ENCODE measurements at regions of chr6 and their contacts with region 1.

Region 1: GRCh38 chr6:13711733-13712598 is at the start of gene RANBP9:
- DNase-seq: peak; percentile 90
- ATAC-seq: peak; percentile 86
- H3K4me3 Mint-ChIP-seq: peak within 1 kb of the TSS; percentile 94
- H3K27ac Mint-ChIP-seq: peak within 1 kb of the TSS; percentile 97
- H3K4me1 Mint-ChIP-seq: peaks cover 51% of the 10 kb centered on the region
- H3K27me3 Mint-ChIP-seq: no peaks in the 10 kb centered on the region
- total RNA-seq, gene RANBP9: 50.0 to 53.4 TPM

Region 2: GRCh38 chr6:12992770-12993169 is 719.2 kb before region 1 on chr6:
- CTCF ChIA-PET with region 1: no interaction called
- POLR2A ChIA-PET with region 1: no interaction called
- DNase-seq: no peak
- ATAC-seq: no peak
- H3K4me3 Mint-ChIP-seq: no peak overlapping the region
- H3K27ac Mint-ChIP-seq: no peak overlapping the region
- H3K4me1 Mint-ChIP-seq: no peaks in the 10 kb centered on the region
- H3K27me3 Mint-ChIP-seq: peaks cover 9% of the 10 kb centered on the region

Region 3: DNA sequence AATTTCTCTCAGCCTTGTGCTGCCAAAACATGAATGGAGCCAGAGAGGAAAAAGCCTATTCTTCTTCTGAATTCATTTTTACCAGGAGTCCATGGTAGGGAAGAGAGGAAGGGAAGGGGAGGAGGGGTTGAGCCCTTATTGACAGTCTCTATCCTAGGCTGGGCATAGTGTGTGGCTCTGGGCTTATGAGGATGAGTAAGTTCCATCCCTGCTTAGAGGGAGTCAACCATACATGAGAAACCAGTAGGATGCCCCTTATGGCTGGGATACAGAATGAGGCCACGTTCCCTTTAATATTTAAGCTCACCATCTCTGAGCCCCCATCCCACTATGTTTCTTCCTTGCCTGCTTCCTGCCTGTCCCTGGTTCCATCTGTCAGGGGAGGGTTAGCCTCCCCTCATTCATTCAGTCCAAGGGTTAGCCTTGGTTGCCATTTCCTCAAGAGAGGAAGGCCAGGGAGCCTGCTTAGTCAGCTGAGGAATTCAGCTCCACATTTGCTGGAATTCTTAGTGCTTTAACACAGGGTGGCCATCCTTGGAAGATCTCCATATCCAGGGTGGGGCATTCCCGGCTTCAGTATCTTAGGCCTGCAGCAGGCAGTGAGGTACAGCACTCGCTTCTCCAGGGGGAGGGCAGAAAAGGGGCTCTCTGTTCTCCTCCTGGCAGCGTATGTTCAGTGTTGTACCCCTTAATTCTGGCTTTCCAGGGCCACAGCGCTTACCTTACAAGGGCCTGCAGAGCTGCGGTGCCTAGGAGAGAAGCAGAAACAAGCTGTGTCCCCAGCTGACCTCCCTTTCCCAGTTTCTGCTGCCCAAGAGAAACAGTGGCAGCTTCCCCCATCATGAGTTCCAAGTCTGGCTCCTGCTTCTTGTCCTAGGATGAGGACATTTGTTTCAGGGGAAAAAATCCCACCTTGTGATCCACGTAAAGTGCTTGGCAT is 125.1 kb before region 1 on chr6:
- CTCF ChIA-PET with region 1: no interaction called
- POLR2A ChIA-PET with region 1: no interaction called
- DNase-seq: no peak
- ATAC-seq: no peak
- H3K4me3 Mint-ChIP-seq: no peak overlapping the region
- H3K27ac Mint-ChIP-seq: no peak overlapping the region
- H3K4me1 Mint-ChIP-seq: no peaks in the 10 kb centered on the region
- H3K27me3 Mint-ChIP-seq: no peaks in the 10 kb centered on the region

Region 4: GRCh38 chr6:13624871-13625288 is 87.1 kb before region 1 on chr6:
- CTCF ChIA-PET with region 1: interaction called, 15 read pairs
- POLR2A ChIA-PET with region 1: interaction called, 3 read pairs
- DNase-seq: peak; percentile 48
- ATAC-seq: peak; percentile 77
- H3K4me3 Mint-ChIP-seq: no peak overlapping the region
- H3K27ac Mint-ChIP-seq: peak overlapping the region; percentile 62
- H3K4me1 Mint-ChIP-seq: peaks cover 2% of the 10 kb centered on the region
- H3K27me3 Mint-ChIP-seq: no peaks in the 10 kb centered on the region

Region 5: DNA sequence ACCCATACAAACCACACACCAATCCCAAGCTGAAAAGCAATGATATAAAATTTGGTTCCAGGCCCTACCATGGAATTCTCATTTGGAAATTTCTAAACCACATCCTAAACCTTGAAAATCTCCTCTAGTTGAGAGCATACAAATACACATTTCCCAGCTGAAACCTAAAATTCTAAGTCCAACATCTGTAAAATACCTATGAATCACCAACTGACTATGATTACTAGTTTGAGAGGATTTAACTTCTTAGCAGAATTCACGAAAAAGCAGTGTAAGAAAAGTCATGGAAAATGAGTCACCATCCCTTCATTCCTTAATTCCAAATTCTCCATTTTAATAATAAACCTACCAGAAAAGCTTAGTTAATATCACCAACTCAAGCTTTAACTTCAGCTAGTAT is 15.7 kb before region 1 on chr6:
- CTCF ChIA-PET with region 1: interaction called, 16 read pairs
- POLR2A ChIA-PET with region 1: interaction called, 20 read pairs
- DNase-seq: no peak
- ATAC-seq: no peak
- H3K4me3 Mint-ChIP-seq: no peak overlapping the region
- H3K27ac Mint-ChIP-seq: no peak overlapping the region
- H3K4me1 Mint-ChIP-seq: peaks cover 51% of the 10 kb centered on the region
- H3K27me3 Mint-ChIP-seq: no peaks in the 10 kb centered on the region

Measured in activated CD8-positive, alpha-beta T cell treated with anti-CD3 and anti-CD28 coated beads, Interleukin-2, amount 10 ng/mL, durations not matched to agents 7 days and 5 days (primary cell).